ENCODE measurements at regions of chr12 and their contacts with region 1.

Region 1: GRCh38 chr12:4276524-4277204 is 3.1 kb downstream of the CCND2 start:
- DNase-seq: peak in 9 of 10 donors; percentile 67 to 82 (median 78)
- H3K4me3 ChIP-seq: peak overlapping the region in 54 of 59 donors; percentile 12 to 89 (median 76)
- H3K27ac ChIP-seq: peak overlapping the region in 23 of 59 donors; percentile 13 to 95 (median 91)
- H3K27me3 ChIP-seq: peaks cover 0 to 55% (median 6%) of the 10 kb centered on the region in 45 donors
- CTCF ChIP-seq: peak; percentile 72 to 94 (median 87)

Region 2: GRCh38 chr12:3885277-3886094 is 391.2 kb before region 1 on chr12:
- intact Hi-C with region 1: loop called (anchors 2 kb)
- DNase-seq: peak in 1 of 10 donors; percentile 28
- H3K4me3 ChIP-seq: peak overlapping the region in 58 of 59 donors; percentile 8 to 60 (median 42)
- H3K27ac ChIP-seq: peak overlapping the region in 52 of 59 donors; percentile 2 to 85 (median 67)
- H3K27me3 ChIP-seq: peaks cover 0 to 45% (median 0%) of the 10 kb centered on the region in 45 donors
- CTCF ChIP-seq: peak; percentile 69 to 93 (median 84)

Region 3: DNA sequence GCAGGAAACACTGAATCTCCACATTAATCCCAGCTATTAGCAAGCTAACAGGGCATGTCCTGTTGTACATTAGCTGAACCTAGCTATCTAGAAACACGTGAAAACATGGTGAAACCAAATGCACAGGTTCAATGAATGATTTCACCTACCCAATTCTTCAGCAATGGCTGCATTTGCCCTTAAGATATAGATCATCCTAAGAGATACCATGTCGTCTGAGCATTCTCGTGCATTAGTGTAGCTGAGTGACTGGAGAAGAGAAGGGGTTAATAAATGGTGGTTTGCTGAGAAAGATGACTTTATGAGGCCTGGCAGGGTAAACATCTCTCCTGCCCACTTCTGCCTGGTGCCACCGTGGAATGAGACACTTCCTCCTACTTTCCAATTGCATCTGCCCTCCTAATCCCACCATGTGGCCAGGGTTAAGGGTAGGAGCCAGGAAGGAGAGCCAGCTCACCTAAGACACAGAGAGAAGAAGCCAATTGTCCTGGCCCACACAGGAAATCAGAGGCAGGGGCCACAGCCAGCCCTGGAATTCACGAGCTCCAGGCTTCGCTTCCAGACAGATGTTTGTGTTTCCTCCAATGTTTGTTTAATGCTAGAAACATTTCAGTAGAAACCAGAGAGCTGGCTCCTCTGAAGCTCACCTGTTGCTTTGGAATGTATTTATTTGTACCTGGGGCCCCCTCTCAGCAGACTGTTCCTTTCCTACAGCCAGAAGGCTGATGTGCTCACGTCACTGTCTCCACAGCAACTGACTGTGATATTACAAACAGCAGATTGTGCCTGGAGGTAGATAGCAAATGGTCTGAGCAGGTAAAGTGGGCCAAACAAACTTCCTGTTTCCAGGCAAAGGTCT is 277.5 kb before region 1 on chr12:
- intact Hi-C with region 1: loop called (anchors 5 kb)
- DNase-seq: no peak
- H3K4me3 ChIP-seq: no peak overlapping the region
- H3K27ac ChIP-seq: no peak overlapping the region
- H3K27me3 ChIP-seq: peaks cover 0 to 21% (median 0%) of the 10 kb centered on the region in 45 donors
- CTCF ChIP-seq: no peak

Region 4: DNA sequence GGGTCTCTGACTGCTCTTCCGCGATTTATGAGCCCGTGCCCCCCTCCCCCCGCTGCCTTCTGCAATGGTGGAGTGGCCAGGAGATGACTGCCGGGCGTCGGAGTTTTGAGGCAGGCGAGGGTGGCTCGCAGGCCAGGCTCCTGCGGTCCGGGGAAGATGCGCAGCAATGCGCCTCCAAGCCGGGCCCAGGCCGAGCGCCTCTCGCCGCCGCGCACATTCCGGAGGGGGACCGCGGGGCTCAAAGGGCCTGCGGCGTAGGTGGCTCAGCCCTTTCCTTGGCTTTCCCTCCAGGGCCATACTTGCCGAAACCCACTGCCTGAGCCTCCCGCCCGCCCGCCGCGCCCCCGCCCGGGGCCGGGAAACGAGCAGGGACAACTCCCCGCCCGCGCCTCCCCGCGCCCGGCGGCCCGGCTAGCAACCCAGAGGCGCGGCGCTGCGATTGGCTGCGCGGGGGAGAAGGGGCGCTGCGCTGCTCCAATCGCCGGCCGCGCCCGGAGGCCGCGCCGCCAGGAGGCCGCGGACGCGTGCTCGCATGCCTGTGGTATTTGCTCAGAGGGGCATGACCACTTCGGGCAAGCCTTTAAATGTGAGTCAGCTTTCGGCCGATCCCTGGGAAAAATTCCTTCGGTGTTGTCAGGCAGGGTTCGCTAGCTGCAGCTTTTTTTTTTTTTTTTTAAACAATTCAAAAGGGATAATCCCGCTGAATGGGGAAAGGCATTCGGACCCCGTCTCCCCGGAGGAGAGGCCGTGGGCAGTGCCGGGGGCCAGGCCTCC is 245.5 kb before region 1 on chr12:
- intact Hi-C with region 1: loop called in 1 of 2 experiments (anchors 10 kb)
- DNase-seq: peak; percentile 30 to 84 (median 64)
- H3K4me3 ChIP-seq: peak overlapping the region; percentile 39 to 73 (median 62)
- H3K27ac ChIP-seq: peak overlapping the region in 39 of 59 donors; percentile 14 to 85 (median 63)
- H3K27me3 ChIP-seq: peaks cover 0 to 5% (median 0%) of the 10 kb centered on the region in 45 donors
- CTCF ChIP-seq: peak in 17 of 56 donors; percentile 6 to 38 (median 19)

Region 5: DNA sequence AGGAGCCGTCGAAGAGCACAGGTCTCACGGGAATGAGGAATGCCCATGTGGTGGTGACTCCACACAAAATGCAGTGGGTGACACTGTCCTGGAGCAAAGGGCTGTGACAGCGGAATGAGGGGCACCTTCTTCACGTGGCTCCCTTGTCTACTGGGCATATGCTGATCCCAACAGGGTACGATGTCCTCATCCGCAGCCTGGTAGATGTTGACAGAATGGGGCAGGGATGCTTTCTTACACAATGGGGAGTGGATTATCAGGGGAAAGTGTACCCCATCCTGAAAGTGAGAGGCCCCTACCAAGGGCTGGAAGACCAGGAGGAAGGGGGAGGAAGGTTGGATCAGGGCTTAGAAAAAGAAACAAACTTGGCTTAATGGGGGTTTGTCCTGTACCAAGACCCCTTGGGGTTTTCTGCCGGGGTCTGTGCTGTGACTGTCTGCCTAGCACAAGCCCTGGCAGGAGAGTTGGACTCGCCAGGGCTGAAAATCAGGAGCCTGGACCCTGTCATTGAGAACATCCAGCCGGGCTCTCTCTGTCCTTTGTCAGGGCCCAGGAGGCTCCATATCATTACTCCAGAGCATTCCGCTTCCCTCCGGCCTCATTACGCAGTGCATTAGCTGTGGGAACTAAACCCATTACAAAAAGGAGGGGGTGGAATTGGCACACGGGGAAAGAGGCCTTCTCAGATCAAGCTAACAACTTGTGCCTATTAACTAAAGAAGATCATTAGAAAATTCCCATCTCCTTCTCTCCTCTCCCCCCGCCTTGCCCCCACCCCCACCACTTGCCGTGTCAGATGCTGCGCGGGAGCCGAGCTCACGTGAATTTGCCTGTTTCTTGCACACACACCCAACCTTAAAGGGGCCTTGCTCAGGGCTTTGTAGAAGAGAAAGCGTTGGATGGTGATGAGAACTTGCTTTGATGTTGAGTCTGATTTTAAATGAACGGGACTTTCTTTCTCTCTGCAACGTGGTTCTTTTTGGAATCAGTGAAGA is 231.6 kb before region 1 on chr12:
- intact Hi-C with region 1: loop called in 1 of 2 experiments (anchors 5 kb)
- DNase-seq: no peak
- H3K4me3 ChIP-seq: peak overlapping the region in 11 of 59 donors; percentile 2 to 33 (median 19)
- H3K27ac ChIP-seq: no peak overlapping the region
- H3K27me3 ChIP-seq: peaks cover 0 to 31% (median 0%) of the 10 kb centered on the region in 45 donors
- CTCF ChIP-seq: no peak

Region 6: DNA sequence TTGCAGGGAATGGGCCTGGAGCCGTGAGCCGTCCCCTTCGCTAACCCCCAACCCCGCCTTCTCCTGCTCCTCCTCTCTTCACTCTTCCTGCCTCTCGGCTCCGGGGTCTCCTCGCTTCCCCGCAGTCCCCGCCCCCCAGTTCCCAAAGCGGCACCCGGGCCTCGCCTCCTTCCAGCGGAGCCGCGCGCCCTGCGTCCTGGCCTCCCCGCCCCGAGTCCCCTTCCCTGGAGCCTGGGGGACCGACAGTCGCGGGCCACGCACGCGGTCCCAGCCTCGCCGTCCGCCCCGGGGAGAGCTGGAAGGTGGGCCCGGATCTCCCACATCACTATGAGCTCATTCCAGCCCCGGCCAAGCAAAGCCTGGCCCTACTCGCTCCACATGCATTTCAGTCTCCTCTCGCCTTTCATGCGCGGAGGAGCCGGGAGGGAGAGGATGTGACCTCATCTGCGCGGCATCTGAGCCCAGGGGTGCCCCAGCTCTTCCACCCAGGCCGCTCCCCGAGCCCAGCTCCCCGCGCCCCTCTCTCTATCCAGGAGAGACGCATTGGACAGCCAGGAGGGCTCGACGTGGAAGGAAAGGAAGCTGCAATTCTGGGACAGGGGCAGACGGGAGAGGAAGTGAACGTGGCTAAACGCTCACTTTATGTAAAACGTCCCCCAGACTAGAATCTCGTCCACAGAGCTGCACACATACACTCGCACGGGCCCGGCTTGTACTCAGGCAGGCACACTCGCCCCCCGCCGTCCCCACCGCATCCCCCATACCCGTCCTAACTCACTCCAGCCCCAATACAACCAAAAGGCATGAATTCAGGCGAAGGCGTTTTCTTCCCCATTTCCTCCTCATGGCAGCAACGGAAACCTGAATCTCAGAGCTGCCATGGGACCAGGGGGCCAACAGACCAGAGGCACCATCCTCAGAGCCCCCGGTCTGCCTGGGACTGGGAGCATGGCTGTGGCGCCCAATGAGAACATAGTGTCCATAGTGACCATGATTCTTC is 111.8 kb before region 1 on chr12:
- intact Hi-C with region 1: no loop called
- DNase-seq: peak in 6 of 10 donors; percentile 40 to 67 (median 48)
- H3K4me3 ChIP-seq: peak overlapping the region in 58 of 59 donors; percentile 18 to 68 (median 52)
- H3K27ac ChIP-seq: peak overlapping the region in 22 of 59 donors; percentile 6 to 67 (median 46)
- H3K27me3 ChIP-seq: peaks cover 0 to 37% (median 0%) of the 10 kb centered on the region in 45 donors
- CTCF ChIP-seq: no peak

Region 7: GRCh38 chr12:4320853-4321701 is 44.4 kb after region 1 on chr12 and contains the start of gene TIGAR:
- intact Hi-C with region 1: loop called in 1 of 2 experiments (anchors 5 kb)
- DNase-seq: peak; percentile 87 to 99 (median 94)
- H3K4me3 ChIP-seq: peak within 1 kb of the TSS; percentile 64 to 100 (median 89)
- H3K27ac ChIP-seq: peak within 1 kb of the TSS; percentile 36 to 95 (median 83)
- H3K27me3 ChIP-seq: no peaks in the 10 kb centered on the region
- CTCF ChIP-seq: peak in 25 of 56 donors; percentile 3 to 50 (median 18)
- total RNA-seq, gene TIGAR: 6.8 to 24.9 (median 15.4) TPM